Activated T-helper 2 cell treated with anti-CD3 and anti-CD28 coated beads, Interferon-gamma antibody, Interleukin-2, Interleukin-4, amounts not matched to agents 10 μg/mL and 5 μg/mL and 100 μg/mL, durations not matched to agents 14 hours and 24 hours and 36 hours (primary cell): ENCODE measurements at regions of chrX and their contacts with region 1.

Region 1: DNA sequence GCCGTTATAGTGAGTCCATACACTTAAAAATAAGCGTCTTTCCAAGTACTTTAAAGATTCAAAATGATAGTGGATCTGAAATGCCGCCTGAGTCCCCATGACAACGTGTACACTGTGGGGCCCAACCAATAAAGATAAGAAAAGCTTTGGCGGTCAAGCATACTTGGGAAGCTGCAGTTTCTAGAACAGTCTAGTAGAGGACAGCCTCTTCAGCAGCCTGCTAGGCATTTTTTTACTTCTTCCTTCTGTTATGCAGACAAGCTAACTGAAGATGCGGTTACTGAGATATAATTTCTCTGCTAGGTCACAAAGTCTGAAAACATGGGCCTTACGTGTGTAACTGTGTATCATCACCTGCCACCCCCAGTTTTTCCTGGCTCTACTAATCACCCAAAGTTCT is 402 bp upstream of the UPRT start:
- DNase-seq: no peak
- H3K4me3 Mint-ChIP-seq: peak overlapping the region; percentile 95
- H3K27ac Mint-ChIP-seq: peak overlapping the region; percentile 97
- H3K4me1 Mint-ChIP-seq: peaks cover 33% of the 10 kb centered on the region
- H3K27me3 Mint-ChIP-seq: no peaks in the 10 kb centered on the region

Region 2: GRCh38 chrX:75067931-75068330 is 205.6 kb before region 1 on chrX:
- intact Hi-C with region 1: loop called (anchors 10 kb)
- DNase-seq: no peak
- H3K4me3 Mint-ChIP-seq: no peak overlapping the region
- H3K27ac Mint-ChIP-seq: no peak overlapping the region
- H3K4me1 Mint-ChIP-seq: peaks cover 4% of the 10 kb centered on the region
- H3K27me3 Mint-ChIP-seq: no peaks in the 10 kb centered on the region